ENCODE measurements at regions of chr17 and their contacts with region 1.

Region 1: GRCh38 chr17:16453493-16453851 is 38.1 kb downstream of the TRPV2 start:
- DNase-seq: no peak
- H3K4me3 Mint-ChIP-seq: no peak overlapping the region
- H3K27ac Mint-ChIP-seq: no peak overlapping the region
- H3K4me1 Mint-ChIP-seq: peaks cover 11% of the 10 kb centered on the region
- H3K27me3 Mint-ChIP-seq: no peaks in the 10 kb centered on the region

Region 2: GRCh38 chr17:16215002-16215272 is 238.5 kb before region 1 on chr17:
- CTCF ChIA-PET with region 1: no interaction called
- intact Hi-C with region 1: no loop called
- DNase-seq: peak; percentile 35
- H3K4me3 Mint-ChIP-seq: peak overlapping the region; percentile 99
- H3K27ac Mint-ChIP-seq: peak overlapping the region; percentile 86
- H3K4me1 Mint-ChIP-seq: peaks cover 44% of the 10 kb centered on the region
- H3K27me3 Mint-ChIP-seq: no peaks in the 10 kb centered on the region

Region 3: DNA sequence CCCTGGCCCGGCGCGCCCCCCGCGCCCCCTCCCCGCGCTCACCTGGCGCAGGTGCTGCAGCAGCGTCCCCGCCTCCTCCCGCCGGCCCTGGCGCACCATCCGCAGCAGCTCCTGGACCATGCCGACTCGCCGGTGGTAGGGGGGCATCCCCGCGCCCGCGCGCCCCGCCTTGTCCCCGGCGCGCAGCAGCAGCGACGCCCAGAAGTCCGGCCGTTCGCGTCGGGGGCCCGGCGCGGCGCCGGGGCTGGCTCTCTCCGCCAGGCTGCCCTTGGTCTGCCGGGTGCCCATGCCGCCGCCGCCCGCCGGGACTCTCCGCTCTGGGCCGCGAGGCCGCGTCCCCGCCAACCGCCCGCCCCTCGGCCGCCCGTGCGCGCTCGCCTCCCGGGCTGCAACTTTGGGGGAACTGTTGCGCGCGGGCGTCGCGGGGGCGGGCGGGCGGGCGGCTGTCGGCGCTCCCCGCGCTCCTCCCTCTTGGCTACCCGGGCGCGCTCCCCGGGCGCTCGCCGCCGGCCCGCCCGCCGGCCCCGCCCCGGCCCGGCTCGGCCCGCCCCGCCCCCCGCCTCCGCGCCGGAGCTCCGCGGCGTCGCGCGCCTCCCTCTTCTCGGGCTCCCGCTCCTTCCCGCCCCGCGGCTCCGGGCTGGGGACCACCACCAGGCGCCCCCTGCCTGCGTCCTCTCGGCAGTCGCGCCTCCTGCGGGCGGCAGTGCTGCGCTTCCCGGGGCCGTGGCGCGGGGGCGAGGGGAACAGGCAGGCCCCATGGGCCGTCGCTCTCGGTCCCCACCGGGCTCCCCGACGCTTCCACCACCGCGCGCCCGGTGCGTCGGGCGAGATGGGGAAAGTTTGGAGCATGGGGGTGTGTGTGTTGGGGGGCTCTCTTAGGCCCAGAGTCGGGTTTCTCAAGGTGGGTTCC is 38.5 kb after region 1 on chr17 and contains the start of gene LRRC75A:
- CTCF ChIA-PET with region 1: interaction called, 3 read pairs
- intact Hi-C with region 1: loop called (anchors 5 kb)
- DNase-seq: peak; percentile 46
- H3K4me3 Mint-ChIP-seq: peak within 1 kb of the TSS; percentile 73
- H3K27ac Mint-ChIP-seq: no peak within 1 kb of the TSS
- H3K4me1 Mint-ChIP-seq: peaks cover 11% of the 10 kb centered on the region
- H3K27me3 Mint-ChIP-seq: peaks cover 2% of the 10 kb centered on the region
- total RNA-seq, gene LRRC75A: 0.69 to 0.79 TPM

Measured in activated naive CD4-positive, alpha-beta T cell treated with anti-CD3 and anti-CD28 coated beads for 36 hours (primary cell).